SK-N-SH (cell line): ENCODE measurements at regions of chr1 and their contacts with region 1.

Region 1: DNA sequence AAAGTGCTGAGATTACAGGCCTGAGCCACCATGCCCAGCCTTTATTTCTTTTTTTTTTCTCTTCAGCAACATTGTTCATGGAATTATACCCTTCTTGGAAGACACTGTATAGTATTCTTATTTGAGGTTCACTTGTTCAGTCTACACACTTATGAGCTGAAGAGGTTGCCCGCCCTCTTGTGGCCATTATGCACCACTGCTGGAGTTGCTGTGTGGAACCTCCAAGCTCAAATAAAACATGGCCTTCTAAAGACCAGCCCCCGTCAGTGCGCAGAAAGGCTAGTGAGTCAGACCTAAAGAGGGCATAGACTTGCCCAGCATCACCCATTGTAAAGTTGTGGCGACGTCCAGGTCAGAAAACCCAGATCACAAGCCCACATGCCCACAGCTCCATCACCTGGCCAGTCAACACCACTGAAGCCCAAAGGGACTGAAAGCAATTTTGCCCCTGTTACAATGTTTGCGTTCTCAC is 20.4 kb downstream of the LURAP1 start:
- DNase-seq: peak; percentile 78
- H3K4me3 ChIP-seq: peak overlapping the region in 1 of 2 experiments; percentile 2; a peak in 1 of 4 replicates
- H3K27ac ChIP-seq: no peak overlapping the region
- H3K4me1 ChIP-seq: no peaks in the 10 kb centered on the region; a peak in 1 of 4 replicates
- H3K27me3 ChIP-seq: no peaks in the 10 kb centered on the region
- CTCF ChIP-seq: peak; percentile 99
- EP300 ChIP-seq: no peak
- RAD21 ChIP-seq: peak; percentile 80

Region 2: DNA sequence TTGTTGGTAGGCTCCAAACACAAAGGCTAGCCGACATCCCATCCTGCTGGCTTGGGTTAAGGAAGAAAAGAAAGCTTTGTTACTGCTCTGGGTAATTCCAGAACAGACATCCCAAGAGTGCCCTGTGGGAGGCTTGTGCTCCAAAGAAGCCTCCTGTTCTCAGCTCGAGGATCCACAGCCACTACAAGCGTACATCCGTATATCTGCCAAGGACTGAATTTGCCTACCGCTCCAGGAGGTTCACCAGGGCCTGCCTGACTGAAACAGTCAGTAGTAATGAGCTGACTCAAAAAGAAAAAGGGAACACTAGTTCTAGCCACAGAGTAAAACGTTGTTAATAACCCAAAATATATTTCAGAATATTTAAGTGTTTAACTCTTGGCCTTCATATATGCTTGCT is 858.5 kb before region 1 on chr1:
- CTCF ChIA-PET with region 1: no interaction called
- POLR2A ChIA-PET with region 1: no interaction called
- DNase-seq: no peak
- H3K4me3 ChIP-seq: no peak overlapping the region
- H3K27ac ChIP-seq: no peak overlapping the region
- H3K4me1 ChIP-seq: no peaks in the 10 kb centered on the region
- H3K27me3 ChIP-seq: no peaks in the 10 kb centered on the region
- CTCF ChIP-seq: no peak
- EP300 ChIP-seq: no peak
- RAD21 ChIP-seq: no peak

Region 3: DNA sequence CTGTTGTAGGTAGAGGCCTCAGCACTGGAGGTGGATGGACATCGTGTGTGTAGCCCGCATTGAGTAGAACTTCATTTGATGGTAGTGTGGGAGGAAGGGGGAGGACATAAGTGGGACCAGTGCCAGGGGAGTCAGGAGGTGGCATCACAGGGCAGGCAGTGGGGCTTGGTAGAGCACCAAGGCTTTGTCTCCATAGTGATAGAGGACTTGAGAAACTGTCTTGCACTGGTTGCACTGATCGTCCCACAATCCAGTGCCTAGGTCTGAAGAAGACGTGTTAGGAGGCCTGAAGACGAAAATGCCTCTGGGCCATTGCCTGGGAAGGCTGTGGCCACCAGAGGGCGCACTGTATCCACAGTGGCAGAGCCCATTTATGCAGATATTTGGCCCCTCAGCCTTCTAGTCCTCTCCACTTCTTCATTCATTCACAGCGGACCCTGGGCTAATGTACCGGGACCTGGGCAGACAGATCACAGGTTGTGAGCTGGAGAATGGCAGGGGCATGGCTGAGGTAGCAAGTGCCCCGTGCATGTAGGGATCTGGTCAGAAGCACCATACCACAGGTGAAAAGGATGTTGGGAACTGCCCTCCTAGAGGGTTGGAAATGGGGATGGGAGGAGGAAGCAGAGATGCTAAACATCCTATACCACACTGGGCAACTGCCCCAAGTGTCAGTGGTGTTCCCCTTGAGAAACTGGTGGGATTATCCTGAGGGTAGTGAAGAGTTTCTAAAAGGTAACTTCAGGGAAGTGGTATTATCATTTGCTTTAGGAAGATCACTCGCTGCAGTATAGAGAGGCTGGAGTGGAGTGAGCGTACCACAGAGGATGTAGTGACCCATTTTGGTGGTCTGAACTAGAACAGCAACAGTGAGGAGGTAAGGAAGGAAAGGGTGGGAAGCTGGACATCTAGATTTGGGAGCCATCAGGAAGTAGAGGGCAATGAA is 186.3 kb before region 1 on chr1:
- CTCF ChIA-PET with region 1: interaction called, 34 read pairs
- POLR2A ChIA-PET with region 1: no interaction called
- DNase-seq: peak; percentile 82
- H3K4me3 ChIP-seq: peak overlapping the region in 1 of 2 experiments; percentile 40; a peak in 1 of 4 replicates
- H3K27ac ChIP-seq: no peak overlapping the region; a peak in 1 of 4 replicates
- H3K4me1 ChIP-seq: peaks cover 0 to 29% of the 10 kb centered on the region in 2 experiments; a peak in 2 of 4 replicates
- H3K27me3 ChIP-seq: no peaks in the 10 kb centered on the region
- CTCF ChIP-seq: peak; percentile 97
- EP300 ChIP-seq: no peak
- RAD21 ChIP-seq: peak; percentile 90

Region 4: GRCh38 chr1:46197964-46198811 is 25.3 kb before region 1 on chr1 and contains the start of gene POMGNT1:
- CTCF ChIA-PET with region 1: interaction called, 29 read pairs
- POLR2A ChIA-PET with region 1: no interaction called
- DNase-seq: peak; percentile 98
- H3K4me3 ChIP-seq: peak within 1 kb of the TSS; percentile 70 to 76
- H3K27ac ChIP-seq: peak within 1 kb of the TSS; percentile 45 to 77
- H3K4me1 ChIP-seq: peaks cover 5 to 14% of the 10 kb centered on the region in 2 experiments; a peak in 2 of 4 replicates
- H3K27me3 ChIP-seq: no peaks in the 10 kb centered on the region
- CTCF ChIP-seq: peak; percentile 47; the same call in 1 of the 2 replicates
- EP300 ChIP-seq: no peak; a peak in 1 of 4 replicates
- RAD21 ChIP-seq: peak; percentile 50
- polyA plus RNA-seq, gene POMGNT1: 165 and 198 TPM in 2 replicates

Region 5: DNA sequence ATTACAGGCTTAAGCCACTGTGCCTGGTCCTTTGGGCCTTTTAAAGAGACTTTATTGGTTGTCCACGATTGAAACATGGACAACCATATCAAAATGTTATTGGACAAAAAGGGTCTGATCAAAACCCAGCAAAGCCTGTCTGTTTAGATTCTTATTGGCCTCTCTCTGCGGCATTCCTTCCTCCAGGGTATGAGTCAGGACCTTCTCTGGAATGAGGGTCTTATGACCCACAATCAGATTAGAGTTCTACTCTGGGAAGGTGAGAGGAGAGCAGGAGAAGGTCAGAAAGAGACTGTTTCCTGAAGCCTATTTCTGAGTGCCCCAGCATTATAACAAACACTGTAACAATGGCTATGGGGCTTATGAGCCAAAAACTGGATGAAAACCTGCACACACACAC is 12.5 kb before region 1 on chr1:
- CTCF ChIA-PET with region 1: interaction called, 29 read pairs
- POLR2A ChIA-PET with region 1: no interaction called
- DNase-seq: no peak
- H3K4me3 ChIP-seq: no peak overlapping the region
- H3K27ac ChIP-seq: no peak overlapping the region
- H3K4me1 ChIP-seq: no peaks in the 10 kb centered on the region
- H3K27me3 ChIP-seq: no peaks in the 10 kb centered on the region
- CTCF ChIP-seq: 0 out of 2 replicates have a peak, but pooled peaks have one; percentile 7
- EP300 ChIP-seq: no peak
- RAD21 ChIP-seq: no peak

Region 6: DNA sequence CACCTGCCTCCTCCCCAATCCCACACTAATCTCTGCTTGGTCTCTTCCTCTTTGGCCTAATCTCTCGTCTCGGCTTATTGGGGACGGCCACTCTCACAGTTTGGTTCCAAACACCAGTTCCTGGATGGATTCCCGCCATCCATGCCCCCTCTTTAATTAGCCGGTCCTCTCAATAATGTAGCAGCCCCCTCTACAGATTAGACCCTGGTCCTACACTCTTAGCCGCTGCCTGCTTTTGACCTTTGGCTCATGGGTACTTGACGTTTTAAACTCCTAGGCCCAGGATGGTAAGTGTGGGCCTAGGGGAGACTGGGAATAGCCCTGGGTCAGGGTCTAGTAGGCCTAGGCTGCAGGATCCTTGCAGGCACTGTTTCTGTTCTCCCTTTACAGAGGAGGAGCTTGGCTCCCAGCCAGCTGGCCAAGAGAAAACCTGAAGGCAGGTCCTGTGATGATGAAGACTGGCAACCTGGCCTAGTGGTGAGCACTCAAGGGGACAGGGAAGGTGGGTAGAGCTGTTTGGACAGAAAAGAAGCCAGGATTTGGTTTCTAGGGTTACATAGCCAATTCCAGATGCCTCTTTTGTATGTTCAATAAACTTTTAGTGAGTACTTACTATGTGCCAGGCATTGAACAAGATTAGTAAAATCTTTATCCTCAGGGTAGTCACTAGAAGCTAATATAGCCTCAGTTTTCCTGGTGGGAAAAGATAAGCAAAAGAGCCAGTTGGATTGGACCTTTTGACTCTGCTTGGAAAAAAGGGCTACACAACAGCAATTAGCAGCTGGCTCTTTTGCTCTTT is 24.8 kb after region 1 on chr1:
- CTCF ChIA-PET with region 1: interaction called, 19 read pairs
- POLR2A ChIA-PET with region 1: no interaction called
- DNase-seq: peak; percentile 55
- H3K4me3 ChIP-seq: peak overlapping the region; percentile 63 to 70
- H3K27ac ChIP-seq: no peak overlapping the region; a peak in 1 of 4 replicates
- H3K4me1 ChIP-seq: peaks cover 10 to 12% of the 10 kb centered on the region in 2 experiments; a peak in 2 of 4 replicates
- H3K27me3 ChIP-seq: no peaks in the 10 kb centered on the region
- CTCF ChIP-seq: peak; percentile 27; the same call in 1 of the 2 replicates
- EP300 ChIP-seq: no peak
- RAD21 ChIP-seq: no peak